CD4-positive, alpha-beta memory T cell (primary cell): ENCODE measurements at regions of chr21 and their contacts with region 1.

Region 1: GRCh38 chr21:42454786-42455580 is 41.0 kb downstream of the RSPH1 start:
- DNase-seq: no peak
- H3K4me3 ChIP-seq: no peak overlapping the region
- H3K4me3 Mint-ChIP-seq: no peak overlapping the region
- H3K27ac ChIP-seq: no peak overlapping the region
- H3K27ac Mint-ChIP-seq: peak overlapping the region in 1 of 7 donors; percentile 69
- H3K4me1 ChIP-seq: peaks cover 24% of the 10 kb centered on the region
- H3K4me1 Mint-ChIP-seq: peaks cover 8 to 32% (median 21%) of the 10 kb centered on the region in 4 donors
- H3K27me3 ChIP-seq: no peaks in the 10 kb centered on the region
- H3K27me3 Mint-ChIP-seq: no peaks in the 10 kb centered on the region

Region 2: GRCh38 chr21:41121785-41122421 is 1333.1 kb before region 1 on chr21:
- CTCF ChIA-PET with region 1: no interaction called
- POLR2A ChIA-PET with region 1: no interaction called
- intact Hi-C with region 1: no loop called
- DNase-seq: peak in 2 of 5 donors; percentile 11
- H3K4me3 ChIP-seq: no peak overlapping the region
- H3K4me3 Mint-ChIP-seq: no peak overlapping the region
- H3K27ac ChIP-seq: no peak overlapping the region
- H3K27ac Mint-ChIP-seq: no peak overlapping the region
- H3K4me1 ChIP-seq: no peaks in the 10 kb centered on the region
- H3K4me1 Mint-ChIP-seq: no peaks in the 10 kb centered on the region
- H3K27me3 ChIP-seq: no peaks in the 10 kb centered on the region
- H3K27me3 Mint-ChIP-seq: peaks cover 5 to 12% of the 10 kb centered on the region in 2 donors

Region 3: DNA sequence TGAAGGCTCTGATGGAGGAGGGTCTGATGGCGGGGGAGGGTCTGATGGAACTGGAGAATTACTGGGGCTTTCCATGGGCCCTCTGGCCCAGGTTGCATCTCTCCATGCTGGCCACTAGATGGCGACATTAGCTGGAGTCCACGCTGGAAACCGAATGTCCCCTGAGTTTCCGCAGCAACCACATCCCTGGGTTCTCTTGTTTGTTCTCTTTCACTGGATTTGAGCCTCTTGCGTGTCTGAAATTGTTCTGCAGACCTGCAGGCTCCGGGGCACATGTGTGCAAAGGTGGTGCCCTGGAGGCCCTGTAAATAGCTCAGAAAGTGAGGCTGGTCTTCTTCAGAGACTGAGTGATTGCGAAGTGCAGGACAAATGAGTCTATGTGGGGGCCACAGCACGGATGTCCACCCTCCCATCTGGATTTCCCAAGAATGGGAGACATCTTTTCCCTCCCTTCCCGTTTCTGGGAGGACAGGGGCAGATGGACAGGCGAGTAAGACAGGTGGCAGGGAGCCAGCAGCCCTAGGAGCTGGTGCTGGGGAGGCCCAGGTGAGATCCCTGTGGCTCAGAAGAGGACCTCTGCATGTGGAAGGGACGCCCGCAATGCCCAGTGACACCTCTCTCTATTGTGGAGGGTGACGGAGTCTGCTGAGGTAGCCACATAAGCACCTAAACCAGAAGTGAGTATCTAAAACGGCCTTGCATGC is 309.3 kb before region 1 on chr21:
- CTCF ChIA-PET with region 1: interaction called, 7 read pairs
- POLR2A ChIA-PET with region 1: no interaction called
- intact Hi-C with region 1: loop called (anchors 1 kb)
- DNase-seq: peak; percentile 67 to 72 (median 70)
- H3K4me3 ChIP-seq: no peak overlapping the region
- H3K4me3 Mint-ChIP-seq: peak overlapping the region in 1 of 8 donors; percentile 13
- H3K27ac ChIP-seq: no peak overlapping the region
- H3K27ac Mint-ChIP-seq: peak overlapping the region; percentile 28 to 89 (median 51)
- H3K4me1 ChIP-seq: peaks cover 4% of the 10 kb centered on the region
- H3K4me1 Mint-ChIP-seq: peaks cover 4 to 7% (median 5%) of the 10 kb centered on the region in 4 donors
- H3K27me3 ChIP-seq: no peaks in the 10 kb centered on the region
- H3K27me3 Mint-ChIP-seq: peaks cover 5 to 7% of the 10 kb centered on the region in 2 donors

Region 4: GRCh38 chr21:42164064-42164789 is 290.8 kb before region 1 on chr21:
- CTCF ChIA-PET with region 1: interaction called, 3 read pairs
- POLR2A ChIA-PET with region 1: no interaction called
- intact Hi-C with region 1: loop called (anchors 1 kb)
- DNase-seq: peak; percentile 42 to 58 (median 51)
- H3K4me3 ChIP-seq: no peak overlapping the region
- H3K4me3 Mint-ChIP-seq: peak overlapping the region in 1 of 8 donors; percentile 21
- H3K27ac ChIP-seq: no peak overlapping the region
- H3K27ac Mint-ChIP-seq: peak overlapping the region in 3 of 7 donors; percentile 42 to 64 (median 59)
- H3K4me1 ChIP-seq: peaks cover 10% of the 10 kb centered on the region
- H3K4me1 Mint-ChIP-seq: peaks cover 8 to 40% (median 20%) of the 10 kb centered on the region in 4 donors
- H3K27me3 ChIP-seq: no peaks in the 10 kb centered on the region
- H3K27me3 Mint-ChIP-seq: no peaks in the 10 kb centered on the region

Region 5: DNA sequence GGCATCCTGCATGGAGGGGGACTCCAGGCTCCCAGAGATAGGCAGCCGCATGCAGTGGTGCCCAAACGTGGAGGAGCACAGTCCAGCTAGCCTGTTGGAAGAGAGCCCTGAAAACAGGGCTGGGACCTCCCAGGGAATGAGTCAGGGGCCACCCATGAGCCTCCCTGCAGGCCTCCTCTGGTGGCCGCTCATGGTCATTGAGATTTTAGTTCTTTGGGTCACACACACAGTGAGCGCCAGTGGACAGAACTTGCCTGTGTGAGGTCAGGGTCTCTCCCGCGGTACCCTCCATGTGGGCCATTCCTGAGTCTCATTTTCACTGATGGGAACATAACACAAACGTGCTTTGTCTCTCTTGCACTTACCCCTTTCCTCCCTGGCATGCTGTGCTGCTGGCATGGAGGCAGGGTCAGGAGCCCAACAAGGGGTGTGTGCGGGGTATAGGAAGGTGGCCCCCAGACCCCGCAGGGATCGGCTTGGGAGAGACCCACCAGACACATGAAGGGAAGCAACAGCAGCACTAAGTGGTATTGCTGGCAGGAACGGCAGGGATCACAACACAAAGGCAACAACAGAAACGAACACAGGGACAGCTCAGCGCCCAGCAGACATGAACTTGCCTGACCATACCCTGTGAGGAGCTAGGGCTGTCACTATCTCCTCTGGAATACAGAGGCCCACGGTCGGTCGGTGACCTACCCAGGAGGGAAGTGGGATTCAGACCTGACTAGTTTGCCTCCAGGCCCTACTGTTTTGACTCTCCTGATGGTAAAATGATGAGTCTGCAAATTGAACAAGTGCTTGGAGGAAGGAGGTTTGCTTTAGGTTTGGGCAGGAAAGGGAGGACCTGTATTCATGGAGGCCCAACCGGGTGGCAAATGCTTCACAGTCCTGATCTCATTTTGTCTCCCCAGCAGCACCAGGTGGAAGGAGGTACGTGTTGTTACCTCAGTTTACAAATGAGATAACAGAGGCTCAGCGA is 204.3 kb before region 1 on chr21:
- CTCF ChIA-PET with region 1: no interaction called
- POLR2A ChIA-PET with region 1: no interaction called
- intact Hi-C with region 1: no loop called
- DNase-seq: no peak
- H3K4me3 ChIP-seq: no peak overlapping the region
- H3K4me3 Mint-ChIP-seq: no peak overlapping the region
- H3K27ac ChIP-seq: no peak overlapping the region
- H3K27ac Mint-ChIP-seq: peak overlapping the region in 4 of 7 donors; percentile 29 to 62 (median 52)
- H3K4me1 ChIP-seq: peaks cover 9% of the 10 kb centered on the region
- H3K4me1 Mint-ChIP-seq: peaks cover 32 to 47% (median 39%) of the 10 kb centered on the region in 4 donors
- H3K27me3 ChIP-seq: no peaks in the 10 kb centered on the region
- H3K27me3 Mint-ChIP-seq: no peaks in the 10 kb centered on the region

Region 6: GRCh38 chr21:42286416-42286815 is 168.6 kb before region 1 on chr21:
- CTCF ChIA-PET with region 1: no interaction called
- POLR2A ChIA-PET with region 1: no interaction called
- intact Hi-C with region 1: no loop called
- DNase-seq: peak in 1 of 5 donors; percentile 12
- H3K4me3 ChIP-seq: no peak overlapping the region
- H3K4me3 Mint-ChIP-seq: no peak overlapping the region
- H3K27ac ChIP-seq: no peak overlapping the region
- H3K27ac Mint-ChIP-seq: peak overlapping the region in 4 of 7 donors; percentile 6 to 74 (median 61)
- H3K4me1 ChIP-seq: no peaks in the 10 kb centered on the region
- H3K4me1 Mint-ChIP-seq: no peaks in the 10 kb centered on the region
- H3K27me3 ChIP-seq: no peaks in the 10 kb centered on the region
- H3K27me3 Mint-ChIP-seq: no peaks in the 10 kb centered on the region

Region 7: GRCh38 chr21:42309753-42310221 is 145.2 kb before region 1 on chr21:
- CTCF ChIA-PET with region 1: interaction called, 6 read pairs
- POLR2A ChIA-PET with region 1: no interaction called
- intact Hi-C with region 1: loop called (anchors 1 kb)
- DNase-seq: peak; percentile 49 to 61 (median 60)
- H3K4me3 ChIP-seq: no peak overlapping the region
- H3K4me3 Mint-ChIP-seq: no peak overlapping the region
- H3K27ac ChIP-seq: no peak overlapping the region
- H3K27ac Mint-ChIP-seq: peak overlapping the region in 3 of 7 donors; percentile 10 to 29 (median 24)
- H3K4me1 ChIP-seq: peaks cover 8% of the 10 kb centered on the region
- H3K4me1 Mint-ChIP-seq: peaks cover 0 to 8% (median 5%) of the 10 kb centered on the region in 4 donors
- H3K27me3 ChIP-seq: no peaks in the 10 kb centered on the region
- H3K27me3 Mint-ChIP-seq: peaks cover 0 to 9% of the 10 kb centered on the region in 2 donors

Region 8: GRCh38 chr21:42337830-42338728 is 116.9 kb before region 1 on chr21:
- CTCF ChIA-PET with region 1: interaction called, 60 read pairs
- POLR2A ChIA-PET with region 1: interaction called, 5 read pairs
- intact Hi-C with region 1: loop called (anchors 1 kb)
- DNase-seq: peak; percentile 74 to 81 (median 78)
- H3K4me3 ChIP-seq: no peak overlapping the region
- H3K4me3 Mint-ChIP-seq: peak overlapping the region in 3 of 8 donors; percentile 7 to 41 (median 38)
- H3K27ac ChIP-seq: no peak overlapping the region
- H3K27ac Mint-ChIP-seq: peak overlapping the region in 6 of 7 donors; percentile 18 to 82 (median 50)
- H3K4me1 ChIP-seq: peaks cover 10% of the 10 kb centered on the region
- H3K4me1 Mint-ChIP-seq: peaks cover 5 to 14% (median 8%) of the 10 kb centered on the region in 4 donors
- H3K27me3 ChIP-seq: no peaks in the 10 kb centered on the region
- H3K27me3 Mint-ChIP-seq: peaks cover 2 to 4% of the 10 kb centered on the region in 2 donors

Region 9: GRCh38 chr21:42370934-42371654 is 83.9 kb before region 1 on chr21:
- CTCF ChIA-PET with region 1: no interaction called
- POLR2A ChIA-PET with region 1: no interaction called
- intact Hi-C with region 1: no loop called
- DNase-seq: no peak
- H3K4me3 ChIP-seq: no peak overlapping the region
- H3K4me3 Mint-ChIP-seq: no peak overlapping the region
- H3K27ac ChIP-seq: no peak overlapping the region
- H3K27ac Mint-ChIP-seq: peak overlapping the region in 1 of 7 donors; percentile 55
- H3K4me1 ChIP-seq: no peaks in the 10 kb centered on the region
- H3K4me1 Mint-ChIP-seq: peaks cover 2 to 6% (median 4%) of the 10 kb centered on the region in 4 donors
- H3K27me3 ChIP-seq: no peaks in the 10 kb centered on the region
- H3K27me3 Mint-ChIP-seq: no peaks in the 10 kb centered on the region

Region 10: GRCh38 chr21:42381334-42381984 is 73.5 kb before region 1 on chr21:
- CTCF ChIA-PET with region 1: interaction called, 21 read pairs
- POLR2A ChIA-PET with region 1: interaction called, 11 read pairs
- intact Hi-C with region 1: loop called (anchors 1 kb)
- DNase-seq: peak in 3 of 5 donors; percentile 15 to 50 (median 24)
- H3K4me3 ChIP-seq: no peak overlapping the region
- H3K4me3 Mint-ChIP-seq: peak overlapping the region in 1 of 8 donors; percentile 10
- H3K27ac ChIP-seq: no peak overlapping the region
- H3K27ac Mint-ChIP-seq: peak overlapping the region in 2 of 7 donors; percentile 3 to 70
- H3K4me1 ChIP-seq: peaks cover 16% of the 10 kb centered on the region
- H3K4me1 Mint-ChIP-seq: peaks cover 9 to 18% (median 10%) of the 10 kb centered on the region in 4 donors
- H3K27me3 ChIP-seq: no peaks in the 10 kb centered on the region
- H3K27me3 Mint-ChIP-seq: no peaks in the 10 kb centered on the region

Region 11: GRCh38 chr21:42414928-42415769 is 39.8 kb before region 1 on chr21:
- CTCF ChIA-PET with region 1: no interaction called
- POLR2A ChIA-PET with region 1: no interaction called
- intact Hi-C with region 1: loop called (anchors 5 kb)
- DNase-seq: peak; percentile 84 to 99 (median 85)
- H3K4me3 ChIP-seq: peak overlapping the region in 1 of 2 donors; percentile 25
- H3K4me3 Mint-ChIP-seq: peak overlapping the region; percentile 61 to 88 (median 72)
- H3K27ac ChIP-seq: peak overlapping the region; percentile 92
- H3K27ac Mint-ChIP-seq: peak overlapping the region in 5 of 7 donors; percentile 98 to 100 (median 99)
- H3K4me1 ChIP-seq: peaks cover 86% of the 10 kb centered on the region
- H3K4me1 Mint-ChIP-seq: peaks cover 22 to 57% (median 41%) of the 10 kb centered on the region in 4 donors
- H3K27me3 ChIP-seq: no peaks in the 10 kb centered on the region
- H3K27me3 Mint-ChIP-seq: no peaks in the 10 kb centered on the region